CD8-positive, alpha-beta T cell (primary cell): ENCODE measurements at regions of chr12 and their contacts with region 1.

Region 1: DNA sequence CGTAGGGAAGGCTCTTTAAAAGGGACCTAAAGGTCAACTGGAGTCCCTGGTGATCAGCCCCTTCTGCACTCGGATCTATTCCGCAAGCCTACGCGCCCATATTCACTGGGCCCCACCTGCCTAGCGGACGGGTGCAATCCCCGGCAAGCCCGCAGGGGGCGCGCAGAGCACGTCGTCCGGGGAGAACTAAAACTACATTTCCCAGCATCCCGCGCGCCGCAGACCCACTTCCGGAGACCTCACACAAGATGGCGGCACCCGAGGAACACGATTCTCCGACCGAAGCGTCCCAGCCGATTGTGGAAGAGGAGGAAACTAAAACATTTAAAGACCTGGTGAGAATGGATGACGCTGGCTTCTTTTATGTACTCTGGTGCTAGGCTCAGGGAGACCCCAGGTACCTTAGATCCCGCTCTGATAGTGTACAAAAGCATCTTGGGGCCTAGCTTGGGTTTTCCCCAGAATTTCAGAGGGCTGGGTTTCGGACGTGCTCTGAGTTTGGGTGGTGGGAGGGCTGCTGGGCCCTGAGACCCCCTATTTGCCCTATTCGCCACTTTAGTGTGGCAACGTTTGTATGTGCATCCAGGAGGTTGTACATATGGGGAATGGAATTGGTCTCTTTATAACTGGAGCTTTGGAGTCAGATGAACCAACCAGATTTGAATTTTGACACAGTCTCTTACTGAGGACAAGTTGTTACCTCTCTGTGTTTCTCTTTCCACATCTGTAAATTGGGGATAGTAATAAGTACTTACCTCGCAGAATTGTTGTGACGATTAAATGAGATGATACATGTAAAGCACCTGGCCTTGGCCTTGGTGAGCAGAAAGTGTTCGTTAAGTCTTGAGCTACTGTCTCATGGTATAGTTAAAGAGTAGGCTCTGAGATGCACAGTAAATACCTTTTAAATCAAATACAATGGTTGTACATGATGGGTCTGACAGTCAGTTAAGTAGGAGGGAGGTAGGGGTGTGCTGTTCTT is at the start of gene DDX47:
- DNase-seq: peak; percentile 94 to 99 (median 96)
- ATAC-seq: peak; percentile 88
- H3K4me3 ChIP-seq: peak within 1 kb of the TSS; percentile 88 to 98
- H3K4me3 Mint-ChIP-seq: peak within 1 kb of the TSS; percentile 95
- H3K27ac ChIP-seq: peak within 1 kb of the TSS; percentile 78 to 91
- H3K27ac Mint-ChIP-seq: peak within 1 kb of the TSS; percentile 96
- H3K4me1 ChIP-seq: peaks cover 34% of the 10 kb centered on the region
- H3K4me1 Mint-ChIP-seq: peaks cover 65% of the 10 kb centered on the region
- H3K27me3 ChIP-seq: no peaks in the 10 kb centered on the region
- H3K27me3 Mint-ChIP-seq: no peaks in the 10 kb centered on the region
- CTCF ChIP-seq: peak; percentile 93
- total RNA-seq, gene DDX47: 173 to 174 TPM

Region 2: DNA sequence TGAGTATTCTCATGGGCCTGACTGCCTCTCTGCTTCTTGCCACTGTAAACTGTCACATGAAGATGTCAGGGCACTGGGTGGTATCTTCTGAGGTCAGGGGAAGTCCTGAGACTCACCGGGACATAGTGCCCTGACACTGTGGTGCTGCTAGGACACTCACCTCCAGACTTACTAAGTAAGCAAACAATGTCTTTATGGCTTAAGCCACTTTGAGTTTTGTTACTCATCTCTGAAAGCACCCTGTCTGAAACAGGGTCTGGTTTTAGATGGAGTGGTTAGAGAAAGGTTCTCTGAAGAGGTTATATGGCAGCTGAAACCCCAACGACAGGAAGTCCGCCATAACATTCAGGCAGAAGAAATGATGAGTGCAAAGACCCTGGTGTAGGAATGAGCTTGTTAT is 140.1 kb before region 1 on chr12:
- CTCF ChIA-PET with region 1: no interaction called
- POLR2A ChIA-PET with region 1: no interaction called
- intact Hi-C with region 1: no loop called
- DNase-seq: no peak
- ATAC-seq: no peak
- H3K4me3 ChIP-seq: no peak overlapping the region
- H3K4me3 Mint-ChIP-seq: no peak overlapping the region
- H3K27ac ChIP-seq: no peak overlapping the region
- H3K27ac Mint-ChIP-seq: no peak overlapping the region
- H3K4me1 ChIP-seq: no peaks in the 10 kb centered on the region
- H3K4me1 Mint-ChIP-seq: no peaks in the 10 kb centered on the region
- H3K27me3 ChIP-seq: no peaks in the 10 kb centered on the region
- H3K27me3 Mint-ChIP-seq: no peaks in the 10 kb centered on the region
- CTCF ChIP-seq: no peak

Region 3: DNA sequence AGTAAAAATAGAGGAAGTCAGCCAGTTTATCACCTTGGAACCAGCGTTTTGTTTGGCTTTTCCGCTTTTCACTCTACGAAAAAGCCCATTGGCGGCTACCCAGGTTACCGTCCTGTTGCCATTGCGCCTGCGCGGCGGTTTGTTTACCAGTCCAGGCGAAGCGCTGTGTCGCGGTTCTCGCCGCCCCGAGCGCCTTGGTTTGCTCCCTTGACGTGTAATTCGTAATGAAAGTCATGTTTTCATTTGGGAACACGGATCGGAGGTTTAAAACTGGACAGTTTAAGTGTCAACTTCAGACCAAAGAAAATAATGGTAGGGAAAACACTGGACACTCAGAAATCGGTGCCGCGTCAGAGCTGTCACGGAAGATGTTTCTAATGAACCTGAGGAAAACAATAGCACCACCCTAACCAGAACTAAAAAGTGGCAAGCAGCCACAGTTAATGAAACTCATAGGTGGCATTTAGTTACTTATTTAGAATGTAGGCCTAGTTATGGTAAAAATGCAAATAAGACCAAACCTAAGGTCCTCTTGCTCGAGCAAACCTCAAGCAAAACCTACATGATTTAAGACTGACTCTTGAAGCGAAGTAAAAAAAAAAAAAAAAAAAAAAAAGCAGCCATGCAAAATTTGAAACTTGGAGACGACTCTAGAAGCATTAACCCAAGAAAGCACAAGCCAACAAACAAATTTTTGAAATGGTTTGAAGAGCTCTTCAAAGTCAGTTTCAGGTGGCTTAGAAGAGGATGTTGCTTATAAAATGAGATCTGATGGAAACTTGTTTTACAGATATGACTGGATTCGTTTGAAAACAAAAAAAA is 116.6 kb before region 1 on chr12:
- CTCF ChIA-PET with region 1: no interaction called
- POLR2A ChIA-PET with region 1: interaction called, 8 read pairs
- intact Hi-C with region 1: loop called (anchors 1 to 5 kb)
- DNase-seq: peak; percentile 87 to 96 (median 94)
- ATAC-seq: peak; percentile 84
- H3K4me3 ChIP-seq: peak overlapping the region; percentile 42 to 88
- H3K4me3 Mint-ChIP-seq: peak overlapping the region; percentile 93
- H3K27ac ChIP-seq: peak overlapping the region; percentile 96 to 100
- H3K27ac Mint-ChIP-seq: peak overlapping the region; percentile 100
- H3K4me1 ChIP-seq: peaks cover 20% of the 10 kb centered on the region
- H3K4me1 Mint-ChIP-seq: peaks cover 29% of the 10 kb centered on the region
- H3K27me3 ChIP-seq: no peaks in the 10 kb centered on the region
- H3K27me3 Mint-ChIP-seq: no peaks in the 10 kb centered on the region
- CTCF ChIP-seq: no peak

Region 4: GRCh38 chr12:12724661-12725545 is 88.5 kb before region 1 on chr12:
- CTCF ChIA-PET with region 1: interaction called, 3 read pairs
- POLR2A ChIA-PET with region 1: interaction called, 4 read pairs
- intact Hi-C with region 1: loop called in 1 of 2 experiments (anchors 2 kb)
- DNase-seq: peak in 8 of 9 experiments; percentile 82 to 98 (median 86)
- ATAC-seq: peak; percentile 57
- H3K4me3 ChIP-seq: peak overlapping the region; percentile 90 to 92
- H3K4me3 Mint-ChIP-seq: peak overlapping the region; percentile 82
- H3K27ac ChIP-seq: peak overlapping the region; percentile 93 to 97
- H3K27ac Mint-ChIP-seq: peak overlapping the region; percentile 99
- H3K4me1 ChIP-seq: peaks cover 51% of the 10 kb centered on the region
- H3K4me1 Mint-ChIP-seq: peaks cover 52% of the 10 kb centered on the region
- H3K27me3 ChIP-seq: no peaks in the 10 kb centered on the region
- H3K27me3 Mint-ChIP-seq: no peaks in the 10 kb centered on the region
- CTCF ChIP-seq: no peak

Region 5: GRCh38 chr12:12999959-13000615 is 186.7 kb after region 1 on chr12 and contains the start of gene HEBP1:
- CTCF ChIA-PET with region 1: no interaction called
- POLR2A ChIA-PET with region 1: no interaction called
- intact Hi-C with region 1: loop called (anchors 1 to 2 kb)
- DNase-seq: peak; percentile 90 to 98 (median 96)
- ATAC-seq: peak; percentile 95
- H3K4me3 ChIP-seq: peak within 1 kb of the TSS; percentile 84 to 85
- H3K4me3 Mint-ChIP-seq: peak within 1 kb of the TSS; percentile 96
- H3K27ac ChIP-seq: peak within 1 kb of the TSS; percentile 41 to 55
- H3K27ac Mint-ChIP-seq: peak within 1 kb of the TSS; percentile 82
- H3K4me1 ChIP-seq: peaks cover 20% of the 10 kb centered on the region
- H3K4me1 Mint-ChIP-seq: peaks cover 29% of the 10 kb centered on the region
- H3K27me3 ChIP-seq: peaks cover 0 to 4% of the 10 kb centered on the region in 2 experiments
- H3K27me3 Mint-ChIP-seq: peaks cover 6% of the 10 kb centered on the region
- CTCF ChIP-seq: no peak
- total RNA-seq, gene HEBP1: 4.6 to 5.6 TPM

Region 6: DNA sequence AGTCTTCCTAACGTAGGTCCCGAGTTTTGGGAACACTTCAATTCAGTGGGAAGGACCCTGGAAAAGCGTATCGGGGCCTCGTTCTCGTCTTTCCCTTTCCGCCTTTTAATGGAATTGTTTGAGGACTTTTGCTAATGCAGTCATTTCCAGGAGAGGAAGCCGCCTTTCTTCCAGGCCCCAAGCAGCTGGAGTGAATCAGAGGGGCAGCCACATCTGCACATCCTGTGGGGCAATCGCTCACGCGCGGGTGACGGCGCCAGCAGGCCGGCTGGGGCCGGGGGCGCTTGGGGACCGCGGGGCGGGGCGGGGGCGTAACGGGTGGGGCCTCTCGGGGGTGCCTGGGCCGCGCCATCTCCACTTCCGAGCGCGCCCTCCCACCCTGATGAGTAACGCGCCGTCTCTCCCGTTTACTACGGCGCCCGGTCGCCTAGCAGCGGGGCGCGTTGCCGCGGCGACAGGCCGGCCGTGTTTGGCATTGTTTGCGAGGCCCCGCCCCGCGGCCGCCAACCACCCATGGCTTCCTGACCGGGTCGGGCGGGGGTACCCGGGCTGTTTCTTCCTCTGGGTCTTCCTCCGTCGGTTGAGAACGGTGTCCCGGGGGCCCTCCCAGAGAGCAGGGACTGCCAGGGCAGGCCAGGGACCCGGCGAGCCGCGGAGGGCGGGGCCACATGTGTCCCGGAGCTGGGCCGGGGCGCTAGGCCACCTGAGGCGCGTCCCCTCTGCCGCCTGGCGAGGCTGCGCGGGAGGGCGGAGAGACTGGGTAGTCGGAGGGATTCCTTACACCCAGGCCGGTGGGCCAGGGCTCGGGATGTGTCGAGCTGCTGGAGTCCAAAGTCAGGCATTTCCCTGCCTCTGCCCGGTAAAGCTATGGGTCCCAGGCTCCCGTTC is 287.7 kb after region 1 on chr12:
- CTCF ChIA-PET with region 1: interaction called, 3 read pairs
- POLR2A ChIA-PET with region 1: no interaction called
- intact Hi-C with region 1: loop called (anchors 1 to 10 kb)
- DNase-seq: peak; percentile 86 to 97 (median 93)
- ATAC-seq: peak; percentile 87
- H3K4me3 ChIP-seq: peak overlapping the region; percentile 55 to 77
- H3K4me3 Mint-ChIP-seq: peak overlapping the region; percentile 81
- H3K27ac ChIP-seq: peak overlapping the region; percentile 83 to 95
- H3K27ac Mint-ChIP-seq: peak overlapping the region; percentile 89
- H3K4me1 ChIP-seq: peaks cover 27% of the 10 kb centered on the region
- H3K4me1 Mint-ChIP-seq: peaks cover 36% of the 10 kb centered on the region
- H3K27me3 ChIP-seq: no peaks in the 10 kb centered on the region
- H3K27me3 Mint-ChIP-seq: no peaks in the 10 kb centered on the region
- CTCF ChIP-seq: no peak